ENCODE measurements at regions of chr14 and their contacts with region 1.

Region 1: GRCh38 chr14:88030079-88030478 is 25.1 kb downstream of the GPR65 start:
- DNase-seq: no peak
- ATAC-seq: no peak
- H3K4me3 Mint-ChIP-seq: no peak overlapping the region
- H3K27ac Mint-ChIP-seq: peak overlapping the region; percentile 32
- H3K4me1 Mint-ChIP-seq: peaks cover 50% of the 10 kb centered on the region
- H3K27me3 Mint-ChIP-seq: no peaks in the 10 kb centered on the region

Region 2: DNA sequence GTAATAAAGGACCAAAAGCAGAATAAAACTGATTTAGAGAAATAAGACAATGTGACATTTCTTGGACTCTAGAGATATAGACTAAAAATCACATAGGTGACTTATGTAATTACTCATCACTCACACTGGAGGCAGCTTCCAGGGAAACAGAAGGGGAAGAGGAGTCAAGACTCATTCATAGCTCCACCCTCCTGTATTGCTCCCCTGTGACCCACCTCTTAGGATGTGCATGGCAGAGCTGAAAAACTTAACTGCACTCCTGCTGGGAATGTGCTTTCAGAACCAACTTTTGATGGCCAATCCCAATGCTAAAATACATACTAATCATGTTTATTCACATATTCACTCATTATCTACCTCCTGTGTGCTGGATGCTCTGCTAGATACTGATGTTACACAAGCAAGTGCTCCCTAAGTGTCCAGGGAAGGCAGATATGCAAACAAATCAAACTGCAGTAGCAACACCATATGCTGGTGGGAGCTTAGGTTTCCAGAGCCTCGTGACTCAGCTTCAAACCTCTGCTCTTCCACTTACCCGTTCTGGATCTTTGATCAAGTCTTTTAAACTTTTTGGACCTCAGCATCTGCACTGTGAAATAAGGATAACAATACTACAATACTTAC is 353.2 kb before region 1 on chr14:
- CTCF ChIA-PET with region 1: no interaction called
- POLR2A ChIA-PET with region 1: no interaction called
- intact Hi-C with region 1: no loop called
- DNase-seq: no peak
- ATAC-seq: no peak
- H3K4me3 Mint-ChIP-seq: no peak overlapping the region
- H3K27ac Mint-ChIP-seq: no peak overlapping the region
- H3K4me1 Mint-ChIP-seq: no peaks in the 10 kb centered on the region
- H3K27me3 Mint-ChIP-seq: no peaks in the 10 kb centered on the region

Region 3: GRCh38 chr14:88013750-88014349 is 16.2 kb before region 1 on chr14:
- CTCF ChIA-PET with region 1: interaction called, 10 read pairs
- POLR2A ChIA-PET with region 1: no interaction called
- intact Hi-C with region 1: no loop called
- DNase-seq: peak; percentile 50
- ATAC-seq: peak; percentile 58
- H3K4me3 Mint-ChIP-seq: no peak overlapping the region
- H3K27ac Mint-ChIP-seq: no peak overlapping the region
- H3K4me1 Mint-ChIP-seq: peaks cover 63% of the 10 kb centered on the region
- H3K27me3 Mint-ChIP-seq: no peaks in the 10 kb centered on the region

Region 4: GRCh38 chr14:88044851-88045339 is 14.8 kb after region 1 on chr14:
- CTCF ChIA-PET with region 1: interaction called, 6 read pairs
- POLR2A ChIA-PET with region 1: no interaction called
- intact Hi-C with region 1: loop called in 1 of 2 experiments (anchors 1 kb)
- DNase-seq: peak; percentile 12
- ATAC-seq: peak; percentile 95
- H3K4me3 Mint-ChIP-seq: no peak overlapping the region
- H3K27ac Mint-ChIP-seq: peak overlapping the region; percentile 3
- H3K4me1 Mint-ChIP-seq: peaks cover 15% of the 10 kb centered on the region
- H3K27me3 Mint-ChIP-seq: peaks cover 3% of the 10 kb centered on the region

Region 5: DNA sequence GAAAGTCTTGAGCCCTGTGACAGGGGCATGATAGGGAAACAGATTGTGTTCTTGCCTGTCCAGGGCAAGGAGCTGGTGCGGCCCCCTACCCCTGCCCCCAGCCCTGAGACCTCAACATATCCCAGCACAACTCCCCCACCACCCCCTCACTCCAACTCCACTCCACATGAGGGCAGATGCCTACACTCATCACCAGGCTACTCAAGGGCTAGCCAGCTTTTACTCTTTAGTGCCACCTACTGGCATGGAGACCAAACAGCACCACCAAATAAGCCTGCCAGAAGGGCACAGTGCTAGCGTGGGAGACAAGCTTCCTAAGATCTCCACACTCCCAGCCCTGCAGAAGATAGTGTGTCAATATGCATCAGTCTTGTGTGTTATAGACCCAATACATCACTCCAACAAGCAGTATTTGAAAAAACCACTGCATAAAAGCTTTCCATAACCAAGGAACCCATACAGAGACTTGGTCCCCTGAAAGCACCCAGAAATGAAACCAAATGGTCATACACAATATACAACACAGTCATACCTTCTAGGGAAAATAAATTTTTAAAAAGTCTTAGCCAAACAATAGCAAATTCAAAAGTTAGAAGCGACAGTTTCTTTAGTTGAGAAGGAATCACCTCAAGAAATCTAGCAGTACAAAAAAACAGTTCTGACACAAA is 138.6 kb after region 1 on chr14:
- CTCF ChIA-PET with region 1: no interaction called
- POLR2A ChIA-PET with region 1: no interaction called
- intact Hi-C with region 1: no loop called
- DNase-seq: peak; percentile 69
- ATAC-seq: peak; percentile 91
- H3K4me3 Mint-ChIP-seq: no peak overlapping the region
- H3K27ac Mint-ChIP-seq: no peak overlapping the region
- H3K4me1 Mint-ChIP-seq: no peaks in the 10 kb centered on the region
- H3K27me3 Mint-ChIP-seq: peaks cover 7% of the 10 kb centered on the region